Right cardiac atrium (tissue), 5 donors: ENCODE measurements at regions of chr4 and their contacts with region 1.

Region 1: DNA sequence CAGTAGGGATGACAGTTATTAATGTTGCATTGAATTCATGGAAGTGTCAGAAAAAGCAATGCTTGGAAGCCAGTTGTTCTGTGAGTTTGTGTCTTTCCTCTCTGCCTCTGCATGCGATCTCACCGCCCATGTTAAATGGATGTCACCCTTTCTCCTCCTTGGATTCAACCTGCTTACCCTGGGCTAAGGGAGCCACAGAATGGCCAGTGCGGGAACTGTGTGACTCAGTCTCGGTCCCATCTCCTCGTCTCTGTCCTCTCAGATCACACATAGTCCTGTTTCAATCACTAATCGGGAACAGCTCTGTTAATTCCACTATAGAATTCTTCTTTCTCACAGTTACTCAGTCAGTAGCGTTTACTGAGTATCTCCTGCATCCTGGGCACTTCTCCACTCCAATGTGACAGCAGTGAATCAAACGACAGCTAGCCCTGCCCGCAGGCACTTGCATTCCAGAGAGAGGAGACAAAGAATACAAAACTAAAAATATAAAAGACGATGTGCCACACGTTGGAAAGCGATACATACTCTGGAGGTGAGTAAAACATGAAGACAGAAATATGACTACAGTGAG is 53.7 kb upstream of the TLR3 start:
- DNase-seq: peak; percentile 31 to 68 (median 52)
- ATAC-seq: peak; percentile 82 to 84
- H3K4me3 ChIP-seq: no peak overlapping the region
- H3K27ac ChIP-seq: peak overlapping the region; percentile 47
- H3K4me1 ChIP-seq: no peaks in the 10 kb centered on the region
- H3K27me3 ChIP-seq: no peaks in the 10 kb centered on the region

Region 2: DNA sequence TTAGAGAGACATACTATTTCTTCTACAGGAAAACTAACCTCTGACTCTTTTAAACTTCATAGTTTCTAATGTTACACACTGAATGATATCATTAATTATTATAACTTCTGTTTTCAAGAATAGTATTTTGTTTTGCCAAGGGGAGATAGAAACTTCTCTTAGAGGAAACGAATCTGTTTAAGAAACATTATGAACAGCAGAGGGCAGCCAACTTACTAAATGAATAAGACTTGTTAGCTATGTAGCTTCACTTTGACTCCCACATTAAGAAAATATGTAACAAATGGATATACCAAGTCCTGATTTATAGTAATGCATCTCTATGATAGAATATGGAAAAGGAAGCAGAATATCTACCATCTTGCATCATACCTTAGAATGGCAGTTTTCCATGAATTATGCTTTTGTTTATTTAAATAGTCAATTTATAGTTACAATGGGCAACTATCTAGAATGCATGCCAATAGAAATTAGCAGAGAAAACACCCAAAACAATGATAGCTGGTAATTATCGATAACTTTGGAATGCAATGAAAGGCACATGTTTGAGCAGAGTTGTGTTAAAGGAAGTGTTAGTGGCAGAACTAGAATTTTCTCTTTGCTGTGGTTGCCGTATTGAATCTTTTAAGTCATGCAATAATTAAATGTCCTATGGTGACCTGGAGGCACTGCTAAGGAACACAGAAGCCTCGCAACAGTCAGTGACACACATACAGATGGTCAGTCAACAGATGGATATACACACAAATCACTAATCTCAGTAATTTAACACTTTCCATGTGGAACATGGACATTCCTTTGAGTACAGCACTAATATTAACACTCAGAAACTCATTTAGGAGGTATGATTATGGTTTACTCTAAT is 374.3 kb before region 1 on chr4:
- intact Hi-C with region 1: loop called in 3 of 4 experiments (anchors 5 to 10 kb)
- DNase-seq: no peak
- ATAC-seq: no peak
- H3K4me3 ChIP-seq: no peak overlapping the region
- H3K27ac ChIP-seq: no peak overlapping the region
- H3K4me1 ChIP-seq: no peaks in the 10 kb centered on the region
- H3K27me3 ChIP-seq: no peaks in the 10 kb centered on the region

Region 3: GRCh38 chr4:185782523-185782922 is 232.8 kb before region 1 on chr4:
- intact Hi-C with region 1: loop called in 2 of 4 experiments (anchors 10 kb)
- DNase-seq: no peak
- ATAC-seq: peak in 1 of 2 donors; percentile 55
- H3K4me3 ChIP-seq: no peak overlapping the region
- H3K27ac ChIP-seq: peak overlapping the region; percentile 23
- H3K4me1 ChIP-seq: peaks cover 5% of the 10 kb centered on the region
- H3K27me3 ChIP-seq: no peaks in the 10 kb centered on the region

Region 4: DNA sequence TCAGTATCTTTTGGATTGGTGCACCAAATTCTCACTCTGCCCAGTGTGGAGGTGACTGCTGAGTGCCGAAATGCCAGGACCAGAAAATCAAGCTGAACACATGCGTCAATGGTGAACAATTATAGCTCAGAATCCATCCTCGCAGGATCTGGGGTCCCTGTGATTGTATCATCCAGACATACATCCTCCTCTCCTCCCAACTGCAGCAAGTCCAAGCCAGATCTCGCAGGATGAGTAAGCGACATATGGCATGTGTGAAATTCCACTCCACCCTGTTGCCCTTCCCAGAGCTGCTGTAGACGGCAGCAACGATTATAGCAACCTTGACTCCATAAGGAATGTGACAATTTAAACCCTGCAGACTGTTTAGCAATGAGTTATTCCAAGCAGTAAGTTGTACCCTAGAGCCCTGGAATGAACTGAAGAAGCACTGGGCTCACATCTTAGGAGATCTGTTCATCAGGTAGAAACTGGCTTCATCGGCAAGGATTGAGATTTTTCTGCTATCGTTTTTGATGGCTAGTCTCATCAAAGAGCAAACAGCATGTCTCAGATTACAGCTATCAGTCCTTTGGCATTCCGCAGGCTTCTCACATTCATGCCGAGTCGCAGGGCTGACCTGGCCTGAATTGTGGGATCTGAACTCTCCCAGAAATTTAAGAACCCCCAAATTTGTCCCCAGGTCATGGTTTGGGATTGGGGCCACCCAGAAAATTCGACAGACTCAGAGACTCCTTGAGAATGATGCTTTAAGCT is 167.8 kb before region 1 on chr4:
- intact Hi-C with region 1: loop called in 2 of 4 experiments (anchors 10 kb)
- DNase-seq: peak; percentile 69 to 85 (median 84)
- ATAC-seq: peak; percentile 88 to 92
- H3K4me3 ChIP-seq: no peak overlapping the region
- H3K27ac ChIP-seq: peak overlapping the region; percentile 89
- H3K4me1 ChIP-seq: peaks cover 6% of the 10 kb centered on the region
- H3K27me3 ChIP-seq: no peaks in the 10 kb centered on the region

Region 5: DNA sequence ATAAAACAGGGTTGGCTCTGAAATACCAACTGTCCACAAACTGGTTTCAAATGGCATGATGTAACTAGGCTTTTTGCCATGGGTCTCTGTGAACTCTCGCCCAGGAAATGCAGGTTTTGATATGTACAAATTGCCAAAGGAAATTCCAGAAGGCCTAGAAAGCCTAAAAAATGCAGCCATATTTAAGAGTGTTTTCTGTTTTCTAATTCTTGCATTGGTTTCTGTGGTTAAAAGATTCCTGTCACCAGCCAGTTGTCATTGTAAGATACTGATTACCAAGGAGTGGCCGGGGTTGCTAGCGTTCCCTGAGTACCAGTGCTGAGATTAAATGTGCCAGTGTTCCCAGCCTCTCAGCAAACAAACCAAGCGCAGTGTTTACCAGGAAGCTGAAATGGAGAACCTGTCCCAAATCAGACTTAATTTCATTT is 149.4 kb before region 1 on chr4:
- intact Hi-C with region 1: loop called in 1 of 4 experiments (anchors 10 kb)
- DNase-seq: no peak
- ATAC-seq: peak; percentile 58 to 65
- H3K4me3 ChIP-seq: no peak overlapping the region
- H3K27ac ChIP-seq: peak overlapping the region; percentile 78
- H3K4me1 ChIP-seq: no peaks in the 10 kb centered on the region
- H3K27me3 ChIP-seq: no peaks in the 10 kb centered on the region